ENCODE measurements at regions of chr4 and their contacts with region 1.

Region 1: GRCh38 chr4:173505924-173506518 is 24.0 kb downstream of the HAND2 start:
- DNase-seq: no peak
- H3K4me3 ChIP-seq: peak overlapping the region in 1 of 4 donors; percentile 48
- H3K27ac ChIP-seq: no peak overlapping the region
- H3K4me1 ChIP-seq: peaks cover 0 to 32% (median 9%) of the 10 kb centered on the region in 3 donors
- H3K27me3 ChIP-seq: peaks cover 4 to 100% (median 33%) of the 10 kb centered on the region in 4 donors
- CTCF ChIP-seq: peak in 5 of 6 experiments; percentile 28 to 66 (median 44)
- POLR2A ChIP-seq: no peak

Region 2: GRCh38 chr4:173243917-173244658 is 261.9 kb before region 1 on chr4:
- intact Hi-C with region 1: no loop called
- DNase-seq: no peak
- H3K4me3 ChIP-seq: no peak overlapping the region
- H3K27ac ChIP-seq: no peak overlapping the region
- H3K4me1 ChIP-seq: peaks cover 0 to 28% (median 0%) of the 10 kb centered on the region in 3 donors
- H3K27me3 ChIP-seq: no peaks in the 10 kb centered on the region
- CTCF ChIP-seq: no peak
- POLR2A ChIP-seq: no peak

Region 3: GRCh38 chr4:173318648-173319211 is 187.3 kb before region 1 on chr4:
- intact Hi-C with region 1: loop called (anchors 10 kb)
- DNase-seq: no peak
- H3K4me3 ChIP-seq: no peak overlapping the region
- H3K27ac ChIP-seq: no peak overlapping the region
- H3K4me1 ChIP-seq: peaks cover 0 to 10% (median 0%) of the 10 kb centered on the region in 3 donors
- H3K27me3 ChIP-seq: no peaks in the 10 kb centered on the region
- CTCF ChIP-seq: peak in 4 of 6 experiments; percentile 3 to 45 (median 39)
- POLR2A ChIP-seq: no peak

Region 4: GRCh38 chr4:173656898-173657297 is 150.9 kb after region 1 on chr4:
- intact Hi-C with region 1: no loop called
- DNase-seq: no peak
- H3K4me3 ChIP-seq: no peak overlapping the region
- H3K27ac ChIP-seq: no peak overlapping the region
- H3K4me1 ChIP-seq: no peaks in the 10 kb centered on the region
- H3K27me3 ChIP-seq: no peaks in the 10 kb centered on the region
- CTCF ChIP-seq: no peak
- POLR2A ChIP-seq: no peak